Lower lobe of right lung (tissue), 2 donors: ENCODE measurements at regions of chr1 and their contacts with region 1.

Region 1: GRCh38 chr1:235253219-235253962 is 74.6 kb downstream of the ARID4B start:
- DNase-seq: no peak
- ATAC-seq: peak; percentile 93 to 94
- H3K4me3 ChIP-seq: no peak overlapping the region
- H3K27ac ChIP-seq: no peak overlapping the region
- H3K4me1 ChIP-seq: peaks cover 2% of the 10 kb centered on the region
- H3K27me3 ChIP-seq: no peaks in the 10 kb centered on the region
- CTCF ChIP-seq: peak; percentile 89

Region 2: DNA sequence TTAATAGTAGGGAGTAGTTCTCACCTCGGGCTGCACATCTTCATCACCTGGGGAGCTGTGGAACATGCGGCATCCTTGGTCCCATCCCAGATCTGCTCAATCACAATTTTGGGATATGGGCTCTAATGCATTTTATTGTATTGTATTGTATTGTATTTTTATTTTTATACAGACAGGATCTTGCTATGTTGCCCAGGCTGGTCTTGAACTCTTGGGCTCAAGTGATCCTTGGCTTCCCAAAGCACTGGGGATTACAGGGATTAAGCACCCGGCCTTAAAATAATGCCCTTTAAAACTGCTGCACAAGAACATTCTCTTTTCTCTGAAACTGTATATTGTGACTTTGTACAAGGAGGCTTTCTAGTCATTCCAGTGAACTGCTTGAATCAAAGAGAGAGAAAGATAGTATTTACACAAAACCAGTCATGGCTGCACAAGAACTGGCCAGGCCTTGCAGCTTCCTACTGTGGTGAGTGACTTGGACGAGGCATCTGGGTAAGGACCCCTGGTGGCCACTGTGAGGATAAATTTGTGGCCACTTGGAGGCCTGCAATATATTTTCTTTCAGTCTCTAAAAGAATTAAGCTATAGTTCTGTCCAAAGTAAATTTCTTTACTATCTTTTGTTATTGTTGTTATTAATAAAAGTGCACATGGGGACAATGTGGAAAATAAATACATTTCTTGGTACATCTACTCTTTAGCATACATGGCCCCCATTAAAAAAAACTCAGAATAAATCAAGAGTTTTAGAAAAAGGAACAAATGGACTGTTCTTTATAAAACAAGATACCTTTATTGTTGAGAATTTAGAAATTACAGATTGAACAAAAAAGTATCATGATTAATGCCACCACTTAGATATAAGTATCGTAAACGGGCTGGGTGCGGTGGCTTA is 161.9 kb after region 1 on chr1:
- intact Hi-C with region 1: loop called (anchors 5 kb)
- DNase-seq: peak; percentile 73
- ATAC-seq: peak; percentile 90 to 92
- H3K4me3 ChIP-seq: no peak overlapping the region
- H3K27ac ChIP-seq: no peak overlapping the region
- H3K4me1 ChIP-seq: no peaks in the 10 kb centered on the region
- H3K27me3 ChIP-seq: no peaks in the 10 kb centered on the region
- CTCF ChIP-seq: peak; percentile 79